ENCODE measurements at regions of chr11 and their contacts with region 1.

Region 1: DNA sequence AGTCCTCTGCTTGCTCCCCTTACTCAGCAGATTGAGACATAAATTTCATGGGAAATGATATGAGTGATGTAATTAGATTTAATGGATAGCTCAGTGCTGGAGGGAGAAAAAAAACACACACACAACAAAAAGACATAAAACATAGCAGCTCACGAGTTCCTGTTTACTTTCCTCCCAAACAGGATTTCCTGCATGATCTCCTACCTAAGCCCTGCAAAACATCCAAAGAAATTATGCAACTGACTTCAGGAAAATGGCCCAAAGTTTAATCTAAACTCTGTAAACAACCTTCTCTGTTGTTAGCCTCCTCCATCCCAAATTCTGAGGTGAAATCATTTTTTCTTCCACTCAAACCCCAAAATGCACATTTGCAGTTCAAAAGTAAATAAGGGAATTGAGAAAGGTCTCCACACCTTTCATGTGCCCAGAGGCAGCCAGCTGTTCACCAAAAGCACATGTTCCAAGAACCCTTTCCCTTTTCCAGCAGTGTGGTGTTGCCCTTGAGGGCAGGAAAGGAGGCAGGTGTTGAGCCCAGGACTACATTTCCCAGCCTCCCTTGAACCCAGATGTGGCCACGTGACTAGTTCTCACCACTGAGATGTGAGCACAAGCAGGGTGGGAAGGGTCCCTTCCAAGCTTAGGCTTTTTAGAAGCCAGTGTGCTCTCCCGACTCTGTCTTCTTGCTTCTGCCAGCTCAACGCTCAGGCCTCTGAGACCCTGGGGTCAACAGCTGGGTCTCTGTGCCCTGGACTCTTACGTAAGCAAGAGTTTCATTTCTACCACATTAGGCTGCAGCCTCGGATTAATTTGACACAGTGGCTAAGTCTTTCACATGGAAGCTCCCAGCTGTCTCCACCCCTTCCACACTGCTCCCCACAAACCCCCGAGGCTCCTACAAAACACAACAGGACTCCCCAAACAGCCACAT is 301.2 kb downstream of the CTTN start:
- DNase-seq: no peak
- ATAC-seq: peak; percentile 15

Region 2: GRCh38 chr11:70861559-70861958 is 162.0 kb after region 1 on chr11:
- intact Hi-C with region 1: no loop called
- DNase-seq: no peak
- ATAC-seq: no peak

Region 3: GRCh38 chr11:72631806-72632731 is 1932.5 kb after region 1 on chr11:
- intact Hi-C with region 1: loop called (anchors 10 kb)
- DNase-seq: no peak
- ATAC-seq: peak; percentile 14